Activated naive CD4-positive, alpha-beta T cell treated with anti-CD3 and anti-CD28 coated beads for 36 hours (primary cell): ENCODE measurements at regions of chr5 and their contacts with region 1.

Region 1: GRCh38 chr5:131796793-131797693 is at the start of gene FNIP1:
- DNase-seq: peak; percentile 99
- H3K4me3 Mint-ChIP-seq: peak within 1 kb of the TSS; percentile 97
- H3K27ac Mint-ChIP-seq: peak within 1 kb of the TSS; percentile 78
- H3K4me1 Mint-ChIP-seq: peaks cover 19% of the 10 kb centered on the region
- H3K27me3 Mint-ChIP-seq: no peaks in the 10 kb centered on the region
- total RNA-seq, gene FNIP1: 16.8 to 17.8 TPM

Region 2: GRCh38 chr5:131252824-131253171 is 544.2 kb before region 1 on chr5:
- CTCF ChIA-PET with region 1: no interaction called
- intact Hi-C with region 1: loop called (anchors 10 kb)
- DNase-seq: peak; percentile 88
- H3K4me3 Mint-ChIP-seq: peak overlapping the region; percentile 94
- H3K27ac Mint-ChIP-seq: peak overlapping the region; percentile 95
- H3K4me1 Mint-ChIP-seq: peaks cover 72% of the 10 kb centered on the region
- H3K27me3 Mint-ChIP-seq: no peaks in the 10 kb centered on the region

Region 3: GRCh38 chr5:131466171-131466766 is 330.8 kb before region 1 on chr5:
- CTCF ChIA-PET with region 1: no interaction called
- intact Hi-C with region 1: loop called (anchors 10 kb)
- DNase-seq: peak; percentile 27
- H3K4me3 Mint-ChIP-seq: no peak overlapping the region
- H3K27ac Mint-ChIP-seq: peak overlapping the region; percentile 68
- H3K4me1 Mint-ChIP-seq: peaks cover 48% of the 10 kb centered on the region
- H3K27me3 Mint-ChIP-seq: no peaks in the 10 kb centered on the region

Region 4: GRCh38 chr5:131595088-131596033 is 201.7 kb before region 1 on chr5:
- CTCF ChIA-PET with region 1: no interaction called
- intact Hi-C with region 1: loop called (anchors 1 kb)
- DNase-seq: peak; percentile 37
- H3K4me3 Mint-ChIP-seq: peak overlapping the region; percentile 48
- H3K27ac Mint-ChIP-seq: peak overlapping the region; percentile 75
- H3K4me1 Mint-ChIP-seq: peaks cover 54% of the 10 kb centered on the region
- H3K27me3 Mint-ChIP-seq: no peaks in the 10 kb centered on the region

Region 5: GRCh38 chr5:131854134-131854533 is 57.1 kb after region 1 on chr5:
- CTCF ChIA-PET with region 1: no interaction called
- intact Hi-C with region 1: loop called (anchors 1 kb)
- DNase-seq: peak; percentile 37
- H3K4me3 Mint-ChIP-seq: no peak overlapping the region
- H3K27ac Mint-ChIP-seq: no peak overlapping the region
- H3K4me1 Mint-ChIP-seq: peaks cover 10% of the 10 kb centered on the region
- H3K27me3 Mint-ChIP-seq: no peaks in the 10 kb centered on the region

Region 6: DNA sequence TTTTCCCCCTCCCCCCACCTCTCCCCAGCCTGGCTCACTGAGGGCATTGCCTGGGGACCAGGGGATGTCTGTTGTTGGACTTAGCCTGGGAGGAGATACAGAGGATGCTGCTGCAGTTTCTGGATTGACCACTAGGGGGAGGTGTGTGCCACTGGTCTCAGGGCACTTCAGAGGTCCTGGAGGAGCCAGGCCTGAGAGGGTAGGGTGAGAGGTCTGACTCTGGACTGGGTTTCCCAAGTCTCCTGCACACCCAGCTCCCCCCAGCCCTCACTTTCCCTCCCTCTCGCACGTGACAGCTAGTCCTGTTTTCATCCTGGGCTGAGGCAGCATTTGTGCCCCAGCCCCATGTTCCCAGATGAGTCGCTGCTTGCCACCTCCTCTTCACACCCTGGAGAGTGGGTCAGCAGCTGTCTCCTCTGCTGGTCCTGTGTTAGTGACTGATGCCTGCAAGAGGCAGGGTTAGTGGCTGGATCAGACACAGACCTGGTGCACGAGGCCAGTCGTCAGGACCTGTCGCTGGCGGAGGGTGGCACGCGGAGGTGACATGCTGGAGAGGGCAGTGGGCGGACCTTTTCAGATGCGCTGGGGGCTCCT is 267.8 kb after region 1 on chr5:
- CTCF ChIA-PET with region 1: no interaction called
- intact Hi-C with region 1: loop called (anchors 5 kb)
- DNase-seq: peak; percentile 91
- H3K4me3 Mint-ChIP-seq: no peak overlapping the region
- H3K27ac Mint-ChIP-seq: no peak overlapping the region
- H3K4me1 Mint-ChIP-seq: peaks cover 13% of the 10 kb centered on the region
- H3K27me3 Mint-ChIP-seq: no peaks in the 10 kb centered on the region

Region 7: DNA sequence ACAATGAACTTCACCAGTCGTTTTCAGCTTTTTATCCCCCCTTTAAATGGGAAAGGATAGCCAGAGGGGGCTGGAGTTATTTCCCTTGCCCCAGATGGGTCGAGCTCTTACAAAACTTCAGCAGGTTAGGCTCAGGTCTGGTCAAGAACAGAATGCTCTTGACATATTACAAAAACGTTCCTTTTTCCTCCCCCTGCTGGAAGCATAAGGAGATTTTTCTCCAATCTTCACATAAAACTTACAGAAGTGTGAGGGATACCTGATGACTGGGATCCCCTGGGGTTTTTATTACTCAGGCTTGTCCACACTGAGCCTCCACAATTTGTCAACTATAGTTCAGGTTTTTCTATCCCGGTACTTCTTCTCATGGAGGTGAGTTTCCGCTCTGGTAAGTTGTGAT is 337.3 kb after region 1 on chr5:
- CTCF ChIA-PET with region 1: no interaction called
- intact Hi-C with region 1: no loop called
- DNase-seq: no peak
- H3K4me3 Mint-ChIP-seq: no peak overlapping the region
- H3K27ac Mint-ChIP-seq: no peak overlapping the region
- H3K4me1 Mint-ChIP-seq: no peaks in the 10 kb centered on the region
- H3K27me3 Mint-ChIP-seq: peaks cover 27% of the 10 kb centered on the region

Region 8: GRCh38 chr5:132490486-132491367 is 693.7 kb after region 1 on chr5 and contains the start of gene IRF1:
- CTCF ChIA-PET with region 1: no interaction called
- intact Hi-C with region 1: loop called (anchors 10 kb)
- DNase-seq: peak; percentile 98
- H3K4me3 Mint-ChIP-seq: peak within 1 kb of the TSS; percentile 91
- H3K27ac Mint-ChIP-seq: peak within 1 kb of the TSS; percentile 97
- H3K4me1 Mint-ChIP-seq: peaks cover 64% of the 10 kb centered on the region
- H3K27me3 Mint-ChIP-seq: no peaks in the 10 kb centered on the region
- total RNA-seq, gene IRF1: 84.3 to 88.4 TPM